Dendritic cell treated with granulocyte-macrophage colony-stimulating factor and Interleukin-4, amounts not matched to agents 40 ng/mL and 50 ng/mL, for 4 days (primary cell): ENCODE measurements at regions of chr16 and their contacts with region 1.

Region 1: GRCh38 chr16:1705688-1706385 is at the start of gene MAPK8IP3:
- H3K4me3 Mint-ChIP-seq: peak within 1 kb of the TSS; percentile 95
- H3K27ac Mint-ChIP-seq: peak within 1 kb of the TSS; percentile 98
- H3K4me1 Mint-ChIP-seq: peaks cover 49% of the 10 kb centered on the region
- H3K27me3 Mint-ChIP-seq: no peaks in the 10 kb centered on the region

Region 2: DNA sequence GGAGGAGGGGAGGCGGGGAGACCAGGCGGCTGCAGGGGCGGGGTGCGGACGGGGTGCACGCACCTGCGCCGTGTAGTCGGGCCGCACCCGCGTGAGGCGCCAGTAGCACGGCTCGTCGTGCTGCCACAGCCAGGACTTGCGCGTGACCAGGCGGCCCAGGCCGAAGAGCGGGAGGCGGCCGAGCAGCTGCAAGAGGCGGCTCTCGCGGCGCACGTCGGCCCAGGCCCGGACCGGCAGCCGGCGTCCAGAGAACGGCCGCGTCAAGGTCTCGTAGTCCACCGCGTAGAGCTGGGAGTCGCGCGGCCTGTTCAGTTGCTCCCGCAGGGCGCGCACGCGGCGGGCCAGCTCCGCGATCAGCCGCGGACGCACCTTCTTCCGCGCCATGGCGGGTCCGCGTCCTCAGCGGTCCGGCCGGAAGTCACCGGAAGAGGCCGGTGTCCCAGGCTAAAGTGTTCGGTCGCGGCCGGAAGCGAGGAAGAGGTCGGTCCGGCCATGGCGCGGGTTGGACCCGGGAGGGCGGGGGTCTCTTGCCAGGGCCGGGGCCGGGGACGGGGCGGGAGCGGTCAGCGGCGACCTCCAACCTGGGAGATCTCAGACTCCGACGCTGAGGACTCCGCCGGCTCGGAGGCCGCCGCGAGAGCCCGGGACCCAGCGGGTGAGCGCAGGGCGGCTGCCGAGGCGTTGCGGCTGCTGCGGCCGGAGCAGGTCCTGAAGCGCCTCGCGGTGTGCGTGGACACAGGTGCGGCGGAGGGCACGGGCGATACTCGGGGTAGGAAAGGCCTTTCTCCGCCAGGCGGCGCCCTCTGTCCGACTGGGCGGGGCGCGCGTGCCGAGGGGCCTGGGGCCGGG is 67.1 kb after region 1 on chr16 and contains the starts of genes EME2 and MRPS34:
- intact Hi-C with region 1: loop called (anchors 5 kb)
- H3K4me3 Mint-ChIP-seq: peak within 1 kb of the TSS; percentile 90
- H3K27ac Mint-ChIP-seq: peak within 1 kb of the TSS; percentile 85
- H3K4me1 Mint-ChIP-seq: peaks cover 51% of the 10 kb centered on the region
- H3K27me3 Mint-ChIP-seq: no peaks in the 10 kb centered on the region